ENCODE measurements at regions of chr13 and their contacts with region 1.

Region 1: DNA sequence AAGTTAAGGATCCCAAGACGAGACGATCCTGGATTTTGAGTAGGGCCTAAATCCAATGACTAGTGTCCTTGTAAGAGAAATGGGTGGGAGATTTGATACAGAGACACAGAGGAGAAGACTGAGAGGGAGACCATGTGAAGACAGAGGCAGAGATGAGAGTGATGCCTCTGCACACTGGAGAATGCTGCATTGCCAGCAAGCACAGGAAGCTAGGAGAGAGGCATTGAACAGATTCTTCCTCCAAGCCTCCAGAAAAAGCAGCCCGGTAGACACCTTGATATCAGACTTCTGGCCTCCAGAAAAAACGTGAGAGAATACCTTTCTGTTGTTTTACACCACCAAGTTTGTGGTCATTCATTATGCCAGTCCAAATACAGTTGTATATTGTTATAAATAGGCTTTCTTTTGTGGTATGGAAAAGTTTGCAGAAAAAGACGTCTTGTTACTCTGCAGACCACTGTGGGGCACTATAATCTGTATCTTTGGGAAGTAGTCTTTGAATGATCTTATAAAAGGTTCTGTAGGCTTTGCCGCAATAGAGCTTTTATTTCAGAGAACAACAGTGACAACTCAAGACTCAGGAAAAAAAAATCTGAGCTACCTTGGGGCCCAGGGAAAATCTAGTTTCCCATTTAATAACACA is 17.9 kb upstream of the RFC3 start:
- DNase-seq: no peak
- ATAC-seq: peak in 6 of 8 donors; percentile 18 to 64 (median 46)
- H3K4me3 ChIP-seq: peak overlapping the region in 4 of 10 donors; percentile 2 to 33 (median 10)
- H3K27ac ChIP-seq: peak overlapping the region in 4 of 10 donors; percentile 6 to 79 (median 52)
- H3K4me1 ChIP-seq: peaks cover 0 to 41% (median 20%) of the 10 kb centered on the region in 9 donors
- H3K27me3 ChIP-seq: no peaks in the 10 kb centered on the region
- CTCF ChIP-seq: peak in 7 of 9 donors; percentile 30 to 71 (median 61)

Region 2: DNA sequence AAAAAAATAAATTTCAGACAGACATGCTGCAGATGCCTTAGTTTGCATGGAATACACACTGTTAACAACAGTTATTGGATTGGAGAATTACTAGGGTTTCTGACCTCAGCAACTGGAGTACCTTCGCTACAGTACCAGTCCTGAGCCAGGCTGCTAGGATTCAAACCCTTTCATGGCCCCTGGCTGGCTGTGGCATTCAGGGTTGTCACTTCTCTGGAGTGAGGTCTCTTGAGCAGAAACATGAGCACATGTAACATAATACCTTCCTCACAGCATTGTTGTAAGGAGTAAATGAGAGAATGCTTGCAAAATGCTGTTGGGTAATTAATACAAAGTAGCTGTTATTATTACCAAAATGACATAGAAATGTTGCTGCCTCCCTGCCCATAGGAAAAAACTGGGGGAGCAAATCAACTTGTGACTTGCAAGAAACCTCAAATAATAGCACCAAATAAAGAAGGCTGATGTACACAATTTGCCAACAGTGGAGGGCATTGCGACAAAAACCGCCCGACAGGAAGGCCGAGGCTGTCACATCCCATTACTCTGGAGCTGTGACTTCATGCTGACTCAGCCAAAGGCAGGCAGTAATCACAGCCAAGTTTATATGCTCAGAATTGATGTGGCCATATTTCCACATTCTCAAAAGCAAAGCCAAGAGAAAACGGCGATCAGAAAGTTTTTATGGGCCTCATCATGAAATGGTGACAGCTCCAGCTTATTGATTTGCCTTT is 118.3 kb after region 1 on chr13:
- intact Hi-C with region 1: loop called in 1 of 10 experiments (anchors 10 kb)
- DNase-seq: no peak
- ATAC-seq: peak in 1 of 8 donors; percentile 41
- H3K4me3 ChIP-seq: no peak overlapping the region
- H3K27ac ChIP-seq: no peak overlapping the region
- H3K4me1 ChIP-seq: peaks cover 0 to 15% (median 6%) of the 10 kb centered on the region in 9 donors
- H3K27me3 ChIP-seq: no peaks in the 10 kb centered on the region
- CTCF ChIP-seq: no peak

Region 3: DNA sequence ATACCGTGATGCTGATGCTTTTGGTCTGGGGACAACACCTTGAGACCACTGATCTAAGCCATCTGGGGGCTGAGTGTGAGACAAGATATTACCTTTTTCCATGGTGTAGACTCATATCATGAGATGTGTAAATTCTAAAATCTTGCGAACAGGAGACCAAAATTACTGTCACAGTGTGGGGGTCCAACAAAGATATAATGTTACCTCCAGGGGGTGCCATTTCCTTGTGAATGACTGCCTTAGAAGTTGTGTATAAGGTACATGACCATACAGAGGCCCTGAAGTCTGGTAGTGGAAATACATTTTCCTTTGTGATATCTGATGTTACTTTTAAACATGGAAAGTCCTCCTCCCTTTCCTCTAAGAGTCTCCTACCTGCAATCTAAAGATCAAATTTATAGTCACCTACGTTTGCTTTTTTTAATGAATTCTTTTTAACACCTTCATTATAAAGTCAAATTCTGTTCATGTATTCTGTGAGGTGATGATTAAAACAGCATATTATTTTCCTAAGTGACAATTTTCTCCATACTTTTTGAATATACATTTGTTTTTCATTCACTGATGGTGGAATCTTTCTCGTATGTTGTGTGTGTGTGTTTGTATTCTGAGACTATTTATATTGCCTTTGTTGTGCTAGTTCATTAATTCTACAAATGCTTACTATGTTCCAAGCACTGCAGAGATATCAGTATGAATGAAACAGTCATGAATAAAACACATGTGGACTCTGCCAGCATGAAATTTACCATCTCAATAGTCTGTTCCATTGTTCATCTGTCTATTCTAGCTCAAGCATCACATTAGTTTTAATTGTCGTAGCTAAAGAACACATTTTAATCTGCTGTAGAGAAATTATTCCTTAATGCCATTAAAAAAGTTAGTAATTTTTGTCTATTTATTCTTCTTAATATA is 131.6 kb after region 1 on chr13:
- intact Hi-C with region 1: loop called in 1 of 10 experiments (anchors 5 kb)
- DNase-seq: peak in 1 of 2 donors; percentile 28
- ATAC-seq: peak in 7 of 8 donors; percentile 64 to 85 (median 75)
- H3K4me3 ChIP-seq: no peak overlapping the region
- H3K27ac ChIP-seq: no peak overlapping the region
- H3K4me1 ChIP-seq: peaks cover 0 to 13% (median 0%) of the 10 kb centered on the region in 9 donors
- H3K27me3 ChIP-seq: no peaks in the 10 kb centered on the region
- CTCF ChIP-seq: peak in 8 of 9 donors; percentile 23 to 69 (median 56)